MCF 10A (cell line): ENCODE measurements at regions of chr4 and their contacts with region 1.

Region 1: DNA sequence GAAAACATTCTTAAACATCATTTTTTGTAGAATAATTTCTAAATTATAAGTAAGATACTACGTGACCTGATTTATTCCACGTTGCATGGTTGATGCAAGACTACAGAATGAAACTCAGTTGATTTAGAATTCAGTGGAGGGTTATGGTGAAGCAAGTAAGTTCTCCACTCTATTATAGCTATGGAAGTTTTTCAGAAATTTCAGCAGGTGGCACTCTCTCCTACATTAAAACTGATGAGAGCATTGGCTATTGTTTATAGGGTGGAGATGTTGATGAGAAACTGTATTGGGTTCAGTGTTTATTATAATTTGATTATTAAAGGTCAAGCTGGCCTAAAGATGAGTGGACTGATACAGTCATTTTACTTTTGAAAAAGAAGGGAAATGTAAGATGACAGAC is 88.0 kb downstream of the FNIP2 start:
- DNase-seq: peak; percentile 49
- H3K4me3 Mint-ChIP-seq: no peak overlapping the region
- H3K27ac Mint-ChIP-seq: no peak overlapping the region
- H3K4me1 Mint-ChIP-seq: no peaks in the 10 kb centered on the region
- H3K27me3 Mint-ChIP-seq: no peaks in the 10 kb centered on the region
- CTCF ChIP-seq: peak; percentile 45

Region 2: DNA sequence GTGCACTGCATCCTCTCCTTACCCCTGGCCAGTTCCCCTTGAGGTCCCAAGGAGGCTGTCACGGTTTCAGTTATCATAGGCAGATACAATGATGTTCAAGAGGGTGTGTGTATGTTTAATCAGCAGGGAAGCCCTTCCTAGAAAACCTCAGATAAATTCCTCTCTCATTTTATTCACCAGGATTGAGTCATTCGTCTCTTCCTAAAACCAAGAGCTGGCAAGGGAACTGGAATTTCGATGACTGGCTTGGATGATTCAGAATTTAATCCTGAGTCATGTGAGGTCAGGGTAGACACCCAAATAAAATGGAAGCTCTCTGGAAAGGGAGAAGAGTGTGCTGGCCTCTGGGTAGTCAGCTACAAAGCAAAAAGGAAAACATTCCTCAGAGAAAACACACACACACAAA is 139.8 kb after region 1 on chr4:
- CTCF ChIA-PET with region 1: interaction called, 3 read pairs
- POLR2A ChIA-PET with region 1: interaction called, 3 read pairs
- intact Hi-C with region 1: loop called (anchors 5 kb)
- DNase-seq: peak; percentile 97
- H3K4me3 Mint-ChIP-seq: no peak overlapping the region
- H3K27ac Mint-ChIP-seq: peak overlapping the region; percentile 63
- H3K4me1 Mint-ChIP-seq: peaks cover 17% of the 10 kb centered on the region
- H3K27me3 Mint-ChIP-seq: no peaks in the 10 kb centered on the region
- CTCF ChIP-seq: no peak

Region 3: GRCh38 chr4:159102622-159103383 is 246.0 kb after region 1 on chr4 and contains the start of gene RAPGEF2:
- CTCF ChIA-PET with region 1: no interaction called
- POLR2A ChIA-PET with region 1: interaction called, 5 read pairs
- intact Hi-C with region 1: loop called (anchors 2 kb)
- DNase-seq: peak; percentile 97
- H3K4me3 Mint-ChIP-seq: peak within 1 kb of the TSS; percentile 93
- H3K27ac Mint-ChIP-seq: peak within 1 kb of the TSS; percentile 89
- H3K4me1 Mint-ChIP-seq: peaks cover 28% of the 10 kb centered on the region
- H3K27me3 Mint-ChIP-seq: no peaks in the 10 kb centered on the region
- CTCF ChIP-seq: no peak
- total RNA-seq, gene RAPGEF2: 26.3 and 27.4 TPM in 2 replicates

Region 4: DNA sequence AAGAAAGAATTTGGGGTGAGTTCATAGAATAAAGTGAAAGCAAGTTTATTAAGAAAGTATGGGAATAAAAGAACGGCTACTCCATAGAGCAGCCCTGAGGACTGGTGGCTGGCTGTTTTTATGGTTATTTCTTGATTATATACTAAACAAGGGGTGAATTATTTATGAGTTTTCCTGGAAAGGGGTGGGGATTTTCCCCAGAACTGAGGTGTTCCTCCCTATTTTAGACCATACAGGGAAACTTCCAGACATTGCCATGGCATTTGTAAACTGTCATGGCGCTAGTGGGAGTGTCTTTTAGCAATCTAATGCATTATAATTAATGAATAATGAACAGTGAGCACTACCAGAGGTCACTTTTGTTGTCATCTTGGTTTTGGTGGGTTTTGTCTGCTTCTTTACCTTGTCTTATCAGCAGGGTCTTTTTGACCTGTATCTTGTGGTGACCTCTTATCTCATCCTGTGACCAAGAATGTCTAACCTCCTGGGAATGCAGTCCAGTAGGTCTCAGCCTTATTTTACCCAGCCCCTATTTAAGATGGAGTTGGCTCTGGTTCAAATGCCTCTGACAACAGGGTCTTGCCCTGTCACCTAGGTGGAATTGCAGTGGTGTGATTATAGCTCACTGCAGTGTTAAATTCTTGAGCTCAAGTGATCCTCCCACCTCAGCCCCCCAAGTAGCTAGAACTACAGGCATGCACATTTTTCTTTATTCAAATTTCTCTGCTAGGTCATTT is 273.1 kb after region 1 on chr4:
- CTCF ChIA-PET with region 1: no interaction called
- POLR2A ChIA-PET with region 1: no interaction called
- intact Hi-C with region 1: no loop called
- DNase-seq: no peak
- H3K4me3 Mint-ChIP-seq: no peak overlapping the region
- H3K27ac Mint-ChIP-seq: no peak overlapping the region
- H3K4me1 Mint-ChIP-seq: peaks cover 5% of the 10 kb centered on the region
- H3K27me3 Mint-ChIP-seq: no peaks in the 10 kb centered on the region
- CTCF ChIP-seq: no peak

Region 5: DNA sequence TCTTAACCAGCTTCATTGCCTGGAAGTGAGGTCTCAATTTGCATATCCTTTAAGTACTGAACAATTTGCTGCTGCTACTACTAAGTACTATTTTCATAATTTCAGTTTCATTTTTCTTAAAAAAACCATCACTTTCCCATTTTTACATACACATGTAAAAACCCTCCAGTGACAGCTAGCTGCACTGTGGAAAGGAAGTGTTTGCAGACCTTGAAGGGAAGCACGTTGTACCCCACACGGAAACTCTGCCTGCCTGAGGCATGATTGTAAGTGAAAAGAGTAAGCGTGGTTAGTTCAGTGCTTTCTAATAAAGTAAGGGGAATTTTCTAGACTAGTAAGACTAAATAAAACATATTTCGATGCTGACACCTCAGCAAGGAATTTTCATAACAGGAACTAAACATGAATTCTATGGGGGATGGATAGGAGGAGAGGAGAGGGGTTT is 349.6 kb after region 1 on chr4:
- CTCF ChIA-PET with region 1: interaction called, 57 read pairs
- POLR2A ChIA-PET with region 1: interaction called, 5 read pairs
- intact Hi-C with region 1: loop called (anchors 1 kb)
- DNase-seq: no peak
- H3K4me3 Mint-ChIP-seq: no peak overlapping the region
- H3K27ac Mint-ChIP-seq: no peak overlapping the region
- H3K4me1 Mint-ChIP-seq: peaks cover 18% of the 10 kb centered on the region
- H3K27me3 Mint-ChIP-seq: no peaks in the 10 kb centered on the region
- CTCF ChIP-seq: no peak

Region 6: DNA sequence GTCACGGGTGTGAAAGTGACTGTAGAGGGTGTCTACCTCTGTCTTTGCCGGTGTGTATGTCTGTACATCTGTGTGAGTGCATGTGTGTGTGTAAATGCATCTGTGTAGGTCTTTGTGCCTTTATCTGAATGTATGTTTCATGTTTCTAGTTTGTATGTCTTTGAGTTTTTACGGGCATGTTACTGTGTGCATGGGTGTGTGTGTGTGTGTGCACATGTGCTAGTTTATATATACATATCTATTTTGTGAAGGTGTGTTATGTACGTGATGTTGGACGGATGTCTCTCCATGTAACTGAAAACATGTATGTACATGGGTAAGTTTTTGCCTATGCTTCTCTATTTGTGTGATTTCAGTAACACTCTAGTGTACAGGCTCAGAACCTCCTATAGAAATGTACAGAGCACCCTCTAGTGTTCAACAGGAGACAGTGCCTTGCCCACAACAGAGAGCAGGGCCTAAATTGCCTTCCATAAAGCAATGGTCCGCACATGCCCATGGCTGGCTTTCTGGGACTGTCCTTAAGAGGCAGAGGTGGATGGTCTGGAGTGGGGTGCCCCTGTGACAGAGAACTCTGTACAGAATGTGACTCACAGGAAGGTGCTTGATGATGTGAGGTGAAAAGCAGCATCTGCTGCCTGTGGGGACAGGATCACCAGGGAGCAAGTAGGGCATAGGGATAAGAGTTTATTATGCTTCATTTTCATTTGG is 589.6 kb after region 1 on chr4:
- CTCF ChIA-PET with region 1: interaction called, 4 read pairs
- POLR2A ChIA-PET with region 1: no interaction called
- intact Hi-C with region 1: loop called (anchors 1 kb)
- DNase-seq: peak; percentile 75
- H3K4me3 Mint-ChIP-seq: no peak overlapping the region
- H3K27ac Mint-ChIP-seq: peak overlapping the region; percentile 23
- H3K4me1 Mint-ChIP-seq: peaks cover 7% of the 10 kb centered on the region
- H3K27me3 Mint-ChIP-seq: no peaks in the 10 kb centered on the region
- CTCF ChIP-seq: peak; percentile 88